ENCODE measurements at regions of chr2 and their contacts with region 1.

Region 1: DNA sequence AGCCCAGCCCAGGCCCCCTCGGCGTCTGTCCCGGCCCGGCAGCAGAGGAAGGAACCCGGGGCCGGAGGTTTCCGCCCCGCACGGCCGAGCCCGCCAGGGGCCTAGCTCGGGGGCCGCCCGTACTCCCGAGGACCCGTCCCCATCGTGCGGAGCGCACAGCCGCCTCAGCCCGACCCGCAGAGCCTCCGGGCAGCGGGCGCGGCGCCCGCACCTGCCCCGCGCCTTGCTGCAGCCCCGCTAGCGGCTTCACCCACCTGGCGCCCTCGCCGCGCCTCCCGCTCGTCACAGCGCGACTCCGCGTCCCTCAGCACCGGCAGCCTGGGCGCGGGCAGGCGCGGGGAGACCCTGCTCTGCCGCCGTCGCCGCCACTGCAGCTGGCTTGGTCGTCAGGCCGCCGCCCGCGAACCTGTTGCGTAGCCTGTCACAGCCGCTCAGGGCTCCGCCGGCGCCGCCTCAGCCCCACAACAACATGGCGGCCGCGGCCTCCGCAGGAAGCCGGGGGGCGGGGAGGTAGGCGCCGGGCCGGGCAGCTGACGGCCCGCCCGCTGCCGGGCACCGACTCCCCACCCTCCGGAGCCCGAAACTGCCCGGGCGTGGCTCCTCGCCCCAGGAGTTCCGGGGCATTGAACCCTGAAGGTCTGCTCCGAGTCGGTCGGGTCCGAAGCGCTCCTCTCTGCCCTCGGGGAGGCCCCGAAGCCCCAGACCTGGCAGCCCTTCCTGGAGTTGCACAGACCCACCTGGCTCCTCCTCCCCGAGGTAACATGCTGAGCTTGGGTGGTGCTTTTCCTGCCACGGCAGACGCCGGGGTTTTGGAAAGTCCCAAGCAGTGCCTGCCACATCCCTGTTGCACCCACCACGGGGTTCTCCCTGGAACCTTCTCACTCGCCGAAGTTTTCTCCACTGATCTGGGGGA is at the start of gene ITSN2:
- DNase-seq: peak; percentile 92
- ATAC-seq: peak; percentile 94
- total RNA-seq, gene ITSN2: 41.2 TPM

Region 2: GRCh38 chr2:24304098-24304497 is 56.2 kb before region 1 on chr2:
- intact Hi-C with region 1: loop called (anchors 5 kb)
- DNase-seq: peak; percentile 73
- ATAC-seq: peak; percentile 97

Region 3: GRCh38 chr2:24515831-24516230 is 155.5 kb after region 1 on chr2:
- intact Hi-C with region 1: no loop called
- DNase-seq: no peak
- ATAC-seq: no peak

Measured in Right ventricle myocardium superior (tissue), 1 donor.